GM12878 (cell line): ENCODE measurements at regions of chr5 and their contacts with region 1.

Region 1: GRCh38 chr5:87137283-87137682 is 130.4 kb upstream of the RASA1 start:
- DNase-seq: no peak
- ATAC-seq: no peak
- H3K4me3 ChIP-seq: no peak overlapping the region
- H3K27ac ChIP-seq: no peak overlapping the region
- H3K4me1 ChIP-seq: no peaks in the 10 kb centered on the region
- H3K27me3 ChIP-seq: no peaks in the 10 kb centered on the region
- CTCF ChIP-seq: no peak
- EP300 ChIP-seq: no peak
- POLR2A ChIP-seq: no peak
- RAD21 ChIP-seq: no peak

Region 2: GRCh38 chr5:86878250-86878649 is 259.0 kb before region 1 on chr5:
- CTCF ChIA-PET with region 1: no interaction called
- POLR2A ChIA-PET with region 1: no interaction called
- RAD21 ChIA-PET with region 1: no interaction called
- SMC1A ChIA-PET with region 1: no interaction called
- in situ Hi-C with region 1: no loop called
- intact Hi-C with region 1: no loop called
- DNase-seq: no peak
- ATAC-seq: no peak
- H3K4me3 ChIP-seq: no peak overlapping the region
- H3K27ac ChIP-seq: no peak overlapping the region
- H3K4me1 ChIP-seq: no peaks in the 10 kb centered on the region
- H3K27me3 ChIP-seq: no peaks in the 10 kb centered on the region
- CTCF ChIP-seq: no peak
- EP300 ChIP-seq: no peak
- POLR2A ChIP-seq: no peak
- RAD21 ChIP-seq: no peak

Region 3: GRCh38 chr5:87151547-87151946 is 14.3 kb after region 1 on chr5:
- CTCF ChIA-PET with region 1: interaction called, 7 read pairs
- POLR2A ChIA-PET with region 1: interaction called, 3 read pairs
- RAD21 ChIA-PET with region 1: interaction called, 3 read pairs
- SMC1A ChIA-PET with region 1: interaction called, 16 read pairs
- in situ Hi-C with region 1: no loop called
- intact Hi-C with region 1: no loop called
- DNase-seq: no peak
- ATAC-seq: peak; percentile 41
- H3K4me3 ChIP-seq: no peak overlapping the region
- H3K27ac ChIP-seq: no peak overlapping the region
- H3K4me1 ChIP-seq: no peaks in the 10 kb centered on the region
- H3K27me3 ChIP-seq: no peaks in the 10 kb centered on the region
- CTCF ChIP-seq: no peak
- EP300 ChIP-seq: no peak
- POLR2A ChIP-seq: no peak
- RAD21 ChIP-seq: no peak